Mammary epithelial cell (primary cell): ENCODE measurements at regions of chr5 and their contacts with region 1.

Region 1: GRCh38 chr5:141223112-141223783 is at the start of gene PCDHB14:
- DNase-seq: peak; percentile 65
- H3K4me3 ChIP-seq: peak within 1 kb of the TSS in 2 of 3 experiments; percentile 17 to 32
- H3K27ac ChIP-seq: no peak within 1 kb of the TSS
- H3K4me1 ChIP-seq: no peaks in the 10 kb centered on the region
- H3K27me3 ChIP-seq: no peaks in the 10 kb centered on the region
- CTCF ChIP-seq: peak in 1 of 2 donors; percentile 38
- total RNA-seq, gene PCDHB14: 1.4 to 1.7 TPM

Region 2: GRCh38 chr5:140346348-140347101 is 876.7 kb before region 1 on chr5 and contains the start of gene HBEGF:
- CTCF ChIA-PET with region 1: no interaction called
- dilution Hi-C with region 1: no loop called
- in situ Hi-C with region 1: no loop called
- intact Hi-C with region 1: no loop called
- DNase-seq: peak; percentile 89
- H3K4me3 ChIP-seq: peak within 1 kb of the TSS; percentile 75 to 83 (median 81)
- H3K27ac ChIP-seq: peak within 1 kb of the TSS; percentile 90
- H3K4me1 ChIP-seq: peaks cover 65% of the 10 kb centered on the region
- H3K27me3 ChIP-seq: no peaks in the 10 kb centered on the region
- CTCF ChIP-seq: peak; percentile 46 to 69
- total RNA-seq, gene HBEGF: 32.5 to 116 TPM

Region 3: DNA sequence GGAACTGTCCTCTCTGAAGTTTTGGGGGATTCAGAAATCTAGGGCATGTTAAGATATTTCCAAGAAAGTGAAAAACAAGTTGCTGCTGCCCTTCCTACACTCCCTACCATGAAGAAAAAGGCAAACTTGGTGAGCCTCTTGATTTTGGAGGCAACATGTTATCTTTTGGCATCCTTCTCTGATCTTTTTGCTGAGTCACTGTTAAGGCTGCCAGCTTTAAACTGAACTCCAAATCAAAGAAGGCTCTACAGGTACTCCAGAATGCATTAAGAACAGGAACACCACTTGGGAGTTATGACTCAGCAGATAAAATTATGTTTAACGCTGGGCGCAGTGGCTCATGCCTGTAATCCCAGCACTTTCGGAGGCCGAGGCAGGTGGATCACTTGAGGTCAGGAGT is 45.9 kb after region 1 on chr5:
- CTCF ChIA-PET with region 1: no interaction called
- dilution Hi-C with region 1: no loop called
- in situ Hi-C with region 1: no loop called
- intact Hi-C with region 1: no loop called
- DNase-seq: no peak
- H3K4me3 ChIP-seq: no peak overlapping the region
- H3K27ac ChIP-seq: no peak overlapping the region
- H3K4me1 ChIP-seq: no peaks in the 10 kb centered on the region
- H3K27me3 ChIP-seq: no peaks in the 10 kb centered on the region
- CTCF ChIP-seq: no peak

Region 4: DNA sequence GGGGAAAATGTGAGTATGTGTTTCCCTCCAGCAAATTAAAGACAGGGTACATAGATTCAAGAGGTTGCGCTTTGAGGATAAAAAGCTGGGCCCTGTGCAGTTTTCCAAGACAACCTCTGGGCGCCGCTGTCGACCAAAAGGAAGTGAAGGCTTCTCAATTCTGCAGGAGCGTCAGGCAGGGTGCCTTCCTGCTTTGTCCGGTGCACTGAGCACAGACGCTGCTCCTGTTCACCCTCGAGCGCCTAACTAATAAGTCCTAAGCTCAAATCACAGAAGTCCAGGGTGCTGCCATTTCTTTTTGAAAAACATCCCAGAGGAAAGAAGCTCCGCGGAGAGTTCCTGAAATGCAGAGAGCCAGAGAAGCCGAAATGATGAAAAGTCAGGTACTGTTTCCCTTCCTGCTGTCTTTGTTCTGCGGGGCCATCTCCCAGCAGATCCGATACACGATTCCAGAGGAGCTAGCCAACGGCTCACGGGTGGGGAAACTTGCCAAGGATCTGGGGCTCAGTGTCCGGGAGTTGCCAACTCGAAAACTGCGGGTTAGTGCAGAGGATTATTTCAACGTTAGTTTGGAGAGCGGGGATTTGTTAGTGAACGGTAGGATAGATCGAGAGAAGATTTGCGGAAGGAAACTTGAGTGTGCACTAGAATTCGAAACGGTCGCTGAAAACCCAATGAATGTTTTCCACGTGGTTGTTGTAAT is 126.8 kb after region 1 on chr5 and contains the start of gene PCDHGB1:
- CTCF ChIA-PET with region 1: no interaction called
- dilution Hi-C with region 1: no loop called
- in situ Hi-C with region 1: no loop called
- intact Hi-C with region 1: loop called (anchors 10 kb)
- DNase-seq: peak; percentile 39
- H3K4me3 ChIP-seq: no peak within 1 kb of the TSS
- H3K27ac ChIP-seq: no peak within 1 kb of the TSS
- H3K4me1 ChIP-seq: no peaks in the 10 kb centered on the region
- H3K27me3 ChIP-seq: no peaks in the 10 kb centered on the region
- CTCF ChIP-seq: peak; percentile 22 to 26
- total RNA-seq, gene PCDHGB1: 1.3 to 3.0 TPM